ENCODE measurements at regions of chr15 and their contacts with region 1.

Region 1: GRCh38 chr15:85330901-85331588 is 49.4 kb upstream of the AKAP13 start:
- DNase-seq: peak; percentile 90 to 92 (median 91)
- ATAC-seq: peak; percentile 86
- H3K4me3 ChIP-seq: no peak overlapping the region
- H3K4me1 ChIP-seq: peaks cover 22% of the 10 kb centered on the region
- CTCF ChIP-seq: peak; percentile 75

Region 2: GRCh38 chr15:85412956-85413854 is 82.2 kb after region 1 on chr15:
- intact Hi-C with region 1: loop called in 1 of 2 experiments (anchors 5 kb)
- DNase-seq: peak; percentile 49 to 73 (median 68)
- ATAC-seq: peak; percentile 98
- H3K4me3 ChIP-seq: no peak overlapping the region
- H3K4me1 ChIP-seq: peaks cover 4% of the 10 kb centered on the region
- CTCF ChIP-seq: no peak